ENCODE measurements at regions of chr9 and their contacts with region 1.

Region 1: GRCh38 chr9:131393622-131394463 is at the start of gene PRRC2B:
- DNase-seq: peak; percentile 87
- H3K4me3 ChIP-seq: peak within 1 kb of the TSS; percentile 85
- H3K27ac ChIP-seq: peak within 1 kb of the TSS; percentile 89
- H3K4me1 ChIP-seq: peaks cover 45% of the 10 kb centered on the region
- CTCF ChIP-seq: peak; percentile 12; the same call in 1 of the 2 replicates
- total RNA-seq, gene PRRC2B: 84.2 and 89.4 TPM in 2 replicates

Region 2: GRCh38 chr9:131441441-131441840 is 47.6 kb after region 1 on chr9:
- CTCF ChIA-PET with region 1: no interaction called
- POLR2A ChIA-PET with region 1: no interaction called
- intact Hi-C with region 1: no loop called
- DNase-seq: peak; percentile 27
- H3K4me3 ChIP-seq: no peak overlapping the region
- H3K27ac ChIP-seq: peak overlapping the region; percentile 28
- H3K4me1 ChIP-seq: peaks cover 11% of the 10 kb centered on the region
- CTCF ChIP-seq: no peak

Region 3: DNA sequence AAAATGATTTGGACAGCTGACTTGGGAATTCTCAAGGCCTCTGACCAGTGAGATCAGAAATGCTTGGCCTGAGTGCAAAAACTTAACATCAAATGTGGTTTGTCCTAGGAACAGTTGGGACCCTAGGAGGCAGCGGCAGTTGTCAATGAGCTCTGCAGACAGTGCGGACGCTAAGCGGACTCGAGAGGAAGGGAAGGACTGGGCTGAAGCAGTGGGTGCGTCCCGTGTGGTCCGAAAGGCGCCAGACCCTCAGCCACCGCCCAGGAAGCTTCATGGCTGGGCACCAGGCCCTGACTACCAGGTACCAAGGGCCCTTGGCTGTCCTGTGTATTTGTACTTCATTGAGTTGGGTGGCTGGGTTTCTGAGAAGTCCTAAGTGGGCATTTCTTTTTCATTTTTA is 65.2 kb after region 1 on chr9:
- CTCF ChIA-PET with region 1: no interaction called
- POLR2A ChIA-PET with region 1: interaction called, 10 read pairs
- intact Hi-C with region 1: no loop called
- DNase-seq: no peak
- H3K4me3 ChIP-seq: no peak overlapping the region
- H3K27ac ChIP-seq: no peak overlapping the region
- H3K4me1 ChIP-seq: no peaks in the 10 kb centered on the region
- CTCF ChIP-seq: no peak